Heart right ventricle (tissue), 16 donors: ENCODE measurements at regions of chr14 and their contacts with region 1.

Region 1: DNA sequence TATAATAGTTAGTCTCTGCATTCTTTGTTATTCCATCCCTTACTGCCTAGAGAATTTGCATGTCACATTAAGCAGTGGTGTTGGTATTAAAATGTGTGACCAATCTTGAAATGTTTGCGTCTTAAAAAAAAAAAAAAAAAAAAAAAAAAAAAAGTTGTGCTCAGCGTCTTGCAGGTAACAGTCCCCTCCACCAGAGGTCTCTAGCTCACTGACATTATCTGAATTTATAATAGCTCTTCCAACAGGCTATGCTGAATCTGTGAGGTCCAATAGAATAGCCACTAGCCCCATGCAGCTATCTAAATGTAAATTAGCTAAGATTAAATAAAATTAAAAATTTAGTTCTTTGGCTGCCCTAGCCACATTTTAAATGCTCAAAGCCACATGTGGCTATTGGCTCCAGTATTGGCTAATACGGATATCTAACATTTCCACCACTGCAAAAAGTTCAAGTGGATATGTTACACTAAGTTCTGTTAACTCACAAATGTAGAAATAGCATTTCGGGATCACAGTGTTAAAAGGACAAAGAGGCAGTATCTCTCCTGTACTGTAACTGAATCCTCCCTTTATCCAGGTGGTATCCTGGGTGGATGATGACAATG is 28.7 kb downstream of the NKX2-8 start:
- DNase-seq: no peak
- ATAC-seq: peak in 3 of 8 donors; percentile 55 to 79 (median 58)
- H3K4me3 ChIP-seq: no peak overlapping the region
- H3K27ac ChIP-seq: no peak overlapping the region
- H3K4me1 ChIP-seq: no peaks in the 10 kb centered on the region
- H3K27me3 ChIP-seq: peaks cover 0 to 39% (median 21%) of the 10 kb centered on the region in 7 donors
- CTCF ChIP-seq: peak; percentile 26 to 72 (median 67)

Region 2: GRCh38 chr14:35883677-35884293 is 670.0 kb before region 1 on chr14:
- intact Hi-C with region 1: loop called in 2 of 10 experiments (anchors 5 to 10 kb)
- DNase-seq: no peak
- ATAC-seq: no peak
- H3K4me3 ChIP-seq: no peak overlapping the region
- H3K27ac ChIP-seq: no peak overlapping the region
- H3K4me1 ChIP-seq: peaks cover 0 to 9% (median 5%) of the 10 kb centered on the region in 9 donors
- H3K27me3 ChIP-seq: no peaks in the 10 kb centered on the region
- CTCF ChIP-seq: peak in 8 of 9 donors; percentile 10 to 66 (median 57)

Region 3: GRCh38 chr14:36426836-36427235 is 126.9 kb before region 1 on chr14:
- intact Hi-C with region 1: no loop called
- DNase-seq: no peak
- ATAC-seq: no peak
- H3K4me3 ChIP-seq: no peak overlapping the region
- H3K27ac ChIP-seq: no peak overlapping the region
- H3K4me1 ChIP-seq: no peaks in the 10 kb centered on the region
- H3K27me3 ChIP-seq: peaks cover 0 to 3% (median 0%) of the 10 kb centered on the region in 7 donors
- CTCF ChIP-seq: no peak

Region 4: GRCh38 chr14:36505181-36505815 is 48.5 kb before region 1 on chr14:
- intact Hi-C with region 1: no loop called
- DNase-seq: no peak
- ATAC-seq: no peak
- H3K4me3 ChIP-seq: no peak overlapping the region
- H3K27ac ChIP-seq: no peak overlapping the region
- H3K4me1 ChIP-seq: peaks cover 0 to 18% (median 8%) of the 10 kb centered on the region in 9 donors
- H3K27me3 ChIP-seq: peaks cover 33 to 100% (median 100%) of the 10 kb centered on the region in 7 donors
- CTCF ChIP-seq: no peak

Region 5: DNA sequence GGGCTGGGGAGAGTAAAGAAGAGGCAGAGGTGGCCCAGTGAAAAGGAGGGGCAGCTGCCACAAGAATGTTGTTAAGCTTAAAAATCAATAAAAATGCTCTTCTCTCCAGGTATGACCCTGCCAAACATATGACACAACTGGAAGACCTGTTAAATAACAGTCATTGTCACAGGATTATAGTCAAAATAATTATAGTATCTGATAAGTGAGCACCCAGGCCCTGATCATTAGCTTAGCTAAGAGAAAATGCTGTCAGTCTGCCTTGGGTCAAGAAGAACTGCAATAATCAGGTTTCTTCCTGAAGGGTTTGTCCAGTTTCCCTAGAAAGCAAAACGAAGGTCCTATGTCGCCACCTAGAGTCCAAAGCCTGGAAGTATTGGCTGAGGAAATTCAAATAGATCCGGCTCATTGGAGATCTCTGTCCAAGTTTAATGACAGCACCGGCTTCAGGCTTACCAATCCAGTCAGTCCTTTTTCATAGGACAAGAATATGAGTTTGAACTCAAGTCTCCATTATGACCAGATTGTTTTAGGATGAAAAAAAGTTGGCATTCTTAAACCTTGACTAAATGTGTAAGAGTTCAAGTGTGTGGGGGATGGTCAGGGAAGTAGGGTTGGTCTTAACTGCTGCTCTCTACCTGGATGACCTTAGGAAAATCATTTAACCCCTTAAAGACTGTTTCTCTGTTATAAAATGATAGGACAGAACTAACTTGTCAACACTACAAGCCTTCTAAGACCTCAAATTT is 51.2 kb after region 1 on chr14:
- intact Hi-C with region 1: loop called in 5 of 10 experiments (anchors 5 to 10 kb)
- DNase-seq: peak in 1 of 2 donors; percentile 41
- ATAC-seq: peak in 4 of 8 donors; percentile 34 to 58 (median 38)
- H3K4me3 ChIP-seq: no peak overlapping the region
- H3K27ac ChIP-seq: no peak overlapping the region
- H3K4me1 ChIP-seq: no peaks in the 10 kb centered on the region
- H3K27me3 ChIP-seq: peaks cover 0 to 53% (median 32%) of the 10 kb centered on the region in 7 donors
- CTCF ChIP-seq: peak; percentile 48 to 78 (median 77)

Region 6: GRCh38 chr14:36941783-36942521 is 388.2 kb after region 1 on chr14:
- intact Hi-C with region 1: loop called in 6 of 10 experiments (anchors 2 to 10 kb)
- DNase-seq: peak; percentile 48 to 74
- ATAC-seq: peak in 4 of 8 donors; percentile 54 to 85 (median 67)
- H3K4me3 ChIP-seq: no peak overlapping the region
- H3K27ac ChIP-seq: no peak overlapping the region
- H3K4me1 ChIP-seq: no peaks in the 10 kb centered on the region
- H3K27me3 ChIP-seq: peaks cover 0 to 43% (median 14%) of the 10 kb centered on the region in 7 donors
- CTCF ChIP-seq: peak; percentile 76 to 97 (median 91)

Region 7: DNA sequence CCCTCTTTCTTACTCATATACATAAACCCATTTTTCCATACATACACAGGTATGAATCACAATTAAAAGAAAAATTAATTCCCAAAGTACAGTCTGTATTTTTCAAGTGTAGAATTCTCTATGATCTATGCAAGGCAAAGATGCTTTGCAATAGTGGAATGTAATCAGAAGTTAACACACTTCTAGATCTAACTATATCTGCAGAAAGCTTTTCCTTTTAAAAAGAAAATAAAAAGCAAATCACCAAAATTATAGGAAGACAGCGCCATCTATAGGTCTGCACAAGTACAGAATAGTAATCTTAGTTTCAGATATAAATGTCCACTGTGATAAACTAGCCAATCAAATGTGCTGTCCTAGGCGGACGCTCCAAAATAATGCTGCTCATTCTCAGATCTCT is 596.7 kb after region 1 on chr14:
- intact Hi-C with region 1: loop called in 5 of 10 experiments (anchors 5 to 10 kb)
- DNase-seq: no peak
- ATAC-seq: no peak
- H3K4me3 ChIP-seq: no peak overlapping the region
- H3K27ac ChIP-seq: no peak overlapping the region
- H3K4me1 ChIP-seq: no peaks in the 10 kb centered on the region
- H3K27me3 ChIP-seq: no peaks in the 10 kb centered on the region
- CTCF ChIP-seq: peak in 8 of 9 donors; percentile 47 to 75 (median 68)